A549 (cell line): ENCODE measurements at regions of chr14 and their contacts with region 1.

Region 1: DNA sequence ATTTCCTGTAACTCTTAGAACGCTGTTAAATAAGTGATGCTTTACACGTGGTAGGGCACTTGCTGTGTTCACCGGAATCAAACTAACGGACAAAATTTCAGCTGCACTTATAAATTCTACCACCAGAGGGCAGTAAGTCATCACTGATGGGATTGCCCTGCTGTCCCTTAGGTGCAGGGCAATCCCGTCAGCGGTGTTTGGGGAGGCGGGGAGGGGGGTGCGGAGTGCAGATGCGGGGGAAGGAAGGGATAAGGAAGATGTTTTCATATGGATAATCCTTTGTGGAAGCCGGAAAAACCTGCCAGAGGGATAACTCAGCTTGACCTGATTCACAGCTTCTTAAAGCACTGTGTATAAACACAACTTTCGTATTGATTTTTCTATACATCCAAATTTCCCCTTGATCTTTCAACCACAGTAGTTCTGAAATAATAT is 21.7 kb upstream of the SLC10A1 start:
- DNase-seq: peak; percentile 67 to 71
- ATAC-seq: peak; percentile 82 to 96
- H3K4me3 ChIP-seq: no peak overlapping the region
- H3K27ac ChIP-seq: peak overlapping the region; percentile 65 to 69
- H3K4me1 ChIP-seq: no peaks in the 10 kb centered on the region; the same call in 1 of the 3 replicates
- CTCF ChIP-seq: peak; percentile 96
- EP300 ChIP-seq: no peak
- POLR2A ChIP-seq: no peak
- RAD21 ChIP-seq: peak; percentile 95 to 99

Region 2: DNA sequence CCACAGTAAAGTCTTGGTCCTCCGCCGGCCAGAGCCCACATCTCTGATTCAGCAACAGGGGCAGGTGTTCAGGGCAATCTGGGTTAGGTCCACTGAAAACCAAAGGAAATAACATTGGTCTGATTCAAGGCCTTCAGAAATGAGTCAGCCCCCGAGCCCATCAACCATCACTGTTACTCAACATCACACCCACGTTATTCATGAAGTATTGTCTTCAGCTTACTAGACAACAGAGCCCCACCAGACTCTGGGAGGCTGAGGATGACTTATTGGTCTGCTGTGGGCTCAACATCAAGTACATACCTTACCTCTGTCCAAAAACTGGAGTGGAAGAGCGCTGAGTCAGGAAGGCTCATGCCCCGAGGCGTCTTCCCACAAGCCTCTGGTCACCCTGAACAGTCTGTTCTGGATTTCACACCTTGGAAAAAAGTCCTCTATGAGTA is 1123.4 kb before region 1 on chr14:
- CTCF ChIA-PET with region 1: no interaction called
- POLR2A ChIA-PET with region 1: no interaction called
- DNase-seq: peak; percentile 92 to 97
- ATAC-seq: peak; percentile 94 to 96
- H3K4me3 ChIP-seq: no peak overlapping the region
- H3K27ac ChIP-seq: peak overlapping the region; percentile 86 to 94
- H3K4me1 ChIP-seq: peaks cover 34% of the 10 kb centered on the region
- CTCF ChIP-seq: no peak
- EP300 ChIP-seq: peak; percentile 84 to 90; a peak in 4 of 5 replicates
- POLR2A ChIP-seq: no peak
- RAD21 ChIP-seq: peak; percentile 40 to 64

Region 3: GRCh38 chr14:69727863-69728262 is 90.9 kb before region 1 on chr14:
- CTCF ChIA-PET with region 1: no interaction called
- POLR2A ChIA-PET with region 1: no interaction called
- DNase-seq: no peak
- ATAC-seq: no peak
- H3K4me3 ChIP-seq: no peak overlapping the region
- H3K27ac ChIP-seq: no peak overlapping the region
- H3K4me1 ChIP-seq: no peaks in the 10 kb centered on the region; the same call in 2 of the 3 replicates
- CTCF ChIP-seq: no peak
- EP300 ChIP-seq: no peak
- POLR2A ChIP-seq: no peak
- RAD21 ChIP-seq: no peak

Region 4: DNA sequence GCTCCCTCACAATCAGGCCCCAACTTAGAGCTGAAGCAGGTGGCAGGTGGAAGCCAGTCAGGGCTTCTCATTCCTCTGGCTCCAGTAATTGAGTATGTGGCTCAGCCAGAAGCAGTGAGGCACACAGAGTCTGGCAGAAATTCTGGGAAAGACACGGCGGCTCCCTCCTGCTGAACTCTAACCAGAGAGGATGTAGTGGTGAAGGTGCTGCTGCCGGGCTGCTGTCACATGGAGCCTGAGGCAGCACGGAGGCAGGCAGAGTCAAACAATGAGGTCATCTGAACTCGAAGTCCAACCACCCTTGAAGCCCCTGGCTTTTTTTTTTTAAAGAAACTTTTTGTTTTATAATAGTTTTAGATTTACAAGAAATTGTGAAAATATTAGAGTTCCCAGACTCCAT is 27.0 kb after region 1 on chr14:
- CTCF ChIA-PET with region 1: interaction called, 18 read pairs
- POLR2A ChIA-PET with region 1: no interaction called
- DNase-seq: no peak
- ATAC-seq: no peak; a peak in 1 of 6 replicates
- H3K4me3 ChIP-seq: no peak overlapping the region
- H3K27ac ChIP-seq: no peak overlapping the region
- H3K4me1 ChIP-seq: peaks cover 3% of the 10 kb centered on the region; the same call in 1 of the 3 replicates
- CTCF ChIP-seq: no peak
- EP300 ChIP-seq: no peak
- POLR2A ChIP-seq: no peak
- RAD21 ChIP-seq: no peak

Region 5: DNA sequence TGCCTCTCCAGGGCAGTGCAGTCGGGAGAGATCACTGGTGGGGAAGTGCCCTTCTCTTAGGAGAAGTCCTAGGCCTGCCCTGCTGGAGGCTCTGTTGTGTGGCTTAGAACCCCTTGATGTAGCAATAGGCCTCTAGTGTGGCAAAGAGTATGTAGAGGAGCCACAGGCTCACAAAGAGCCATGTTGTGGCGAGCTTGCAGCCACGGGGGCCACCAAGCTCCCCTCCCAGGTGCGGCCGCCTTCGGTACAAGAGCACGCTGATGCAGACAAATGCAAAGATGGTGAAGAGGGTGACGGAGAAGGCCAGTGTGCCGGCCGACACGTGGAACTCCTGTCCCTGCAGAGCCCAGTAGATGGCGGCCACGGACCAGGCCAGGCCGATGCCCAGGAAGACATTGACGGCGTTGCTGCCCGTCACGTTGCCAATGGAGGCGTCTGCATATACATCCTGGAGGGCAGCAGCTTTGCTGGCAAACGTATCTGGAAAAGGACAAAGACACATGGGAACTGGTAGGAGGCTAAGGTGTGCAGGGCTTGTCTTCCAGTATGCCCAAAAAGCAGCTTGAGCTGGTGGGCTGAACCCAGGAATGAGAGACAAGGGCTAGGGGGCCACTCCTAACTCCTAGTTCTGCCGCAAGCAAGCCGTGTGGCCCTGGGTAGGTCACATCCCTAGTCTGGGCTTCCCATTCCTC is 227.2 kb after region 1 on chr14:
- CTCF ChIA-PET with region 1: interaction called, 19 read pairs
- POLR2A ChIA-PET with region 1: interaction called, 4 read pairs
- DNase-seq: peak; percentile 71 to 82
- ATAC-seq: peak; percentile 87 to 95
- H3K4me3 ChIP-seq: no peak overlapping the region
- H3K27ac ChIP-seq: peak overlapping the region; percentile 89 to 90
- H3K4me1 ChIP-seq: peaks cover 39% of the 10 kb centered on the region
- CTCF ChIP-seq: peak; percentile 74
- EP300 ChIP-seq: no peak
- POLR2A ChIP-seq: no peak; the same call in 1 of the 2 replicates
- RAD21 ChIP-seq: peak; percentile 90

Region 6: DNA sequence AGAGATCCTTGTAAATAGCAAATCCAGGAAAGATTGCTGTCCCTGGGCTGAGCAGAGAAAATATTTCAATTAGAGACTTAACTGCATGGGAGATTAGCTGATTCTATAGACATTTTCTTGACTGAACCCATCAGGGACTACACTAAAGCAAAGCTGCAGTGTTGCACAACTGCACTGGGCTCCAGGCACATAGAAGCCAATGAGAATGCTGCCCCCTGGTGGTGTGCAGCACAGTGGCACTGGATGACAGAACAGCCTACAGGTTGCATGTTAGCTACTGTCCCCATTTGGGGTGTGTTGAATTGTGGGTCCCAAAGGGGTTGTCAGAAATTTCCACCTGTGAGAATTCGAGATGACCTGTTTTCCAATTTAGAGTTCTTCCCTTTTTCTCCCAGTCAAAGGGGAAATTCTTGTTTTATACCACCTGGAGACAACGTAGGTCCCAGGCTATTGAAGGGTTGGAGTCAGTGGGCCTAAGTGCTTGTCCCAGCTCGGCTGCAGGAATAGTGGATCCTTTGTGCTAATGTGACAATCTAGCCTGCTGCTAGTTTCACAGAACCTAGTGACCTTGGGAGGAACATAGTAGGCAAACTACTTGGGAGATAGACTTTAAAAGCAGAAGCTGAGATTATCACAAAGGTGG is 255.3 kb after region 1 on chr14:
- CTCF ChIA-PET with region 1: interaction called, 85 read pairs
- POLR2A ChIA-PET with region 1: interaction called, 3 read pairs
- DNase-seq: peak; percentile 85
- ATAC-seq: peak; percentile 97 to 99
- H3K4me3 ChIP-seq: no peak overlapping the region
- H3K27ac ChIP-seq: peak overlapping the region; percentile 55 to 58; a peak in 5 of 6 replicates
- H3K4me1 ChIP-seq: peaks cover 14% of the 10 kb centered on the region
- CTCF ChIP-seq: peak; percentile 95
- EP300 ChIP-seq: no peak
- POLR2A ChIP-seq: no peak
- RAD21 ChIP-seq: peak; percentile 89 to 95

Region 7: GRCh38 chr14:70317969-70318634 is 499.3 kb after region 1 on chr14:
- CTCF ChIA-PET with region 1: interaction called, 29 read pairs
- POLR2A ChIA-PET with region 1: no interaction called
- DNase-seq: peak; percentile 40 to 78
- ATAC-seq: peak; percentile 97
- H3K4me3 ChIP-seq: peak overlapping the region; percentile 8; the same call in 1 of the 3 replicates
- H3K27ac ChIP-seq: 0 out of 6 replicates have a peak overlapping the region, but pooled peaks of 1 of the 2 experiments have one; percentile 11
- H3K4me1 ChIP-seq: peaks cover 16% of the 10 kb centered on the region; the same call in 2 of the 3 replicates
- CTCF ChIP-seq: peak; percentile 83
- EP300 ChIP-seq: no peak
- POLR2A ChIP-seq: no peak
- RAD21 ChIP-seq: peak; percentile 78 to 92